HEK293 (cell line): ENCODE measurements at regions of chr2 and their contacts with region 1.

Region 1: DNA sequence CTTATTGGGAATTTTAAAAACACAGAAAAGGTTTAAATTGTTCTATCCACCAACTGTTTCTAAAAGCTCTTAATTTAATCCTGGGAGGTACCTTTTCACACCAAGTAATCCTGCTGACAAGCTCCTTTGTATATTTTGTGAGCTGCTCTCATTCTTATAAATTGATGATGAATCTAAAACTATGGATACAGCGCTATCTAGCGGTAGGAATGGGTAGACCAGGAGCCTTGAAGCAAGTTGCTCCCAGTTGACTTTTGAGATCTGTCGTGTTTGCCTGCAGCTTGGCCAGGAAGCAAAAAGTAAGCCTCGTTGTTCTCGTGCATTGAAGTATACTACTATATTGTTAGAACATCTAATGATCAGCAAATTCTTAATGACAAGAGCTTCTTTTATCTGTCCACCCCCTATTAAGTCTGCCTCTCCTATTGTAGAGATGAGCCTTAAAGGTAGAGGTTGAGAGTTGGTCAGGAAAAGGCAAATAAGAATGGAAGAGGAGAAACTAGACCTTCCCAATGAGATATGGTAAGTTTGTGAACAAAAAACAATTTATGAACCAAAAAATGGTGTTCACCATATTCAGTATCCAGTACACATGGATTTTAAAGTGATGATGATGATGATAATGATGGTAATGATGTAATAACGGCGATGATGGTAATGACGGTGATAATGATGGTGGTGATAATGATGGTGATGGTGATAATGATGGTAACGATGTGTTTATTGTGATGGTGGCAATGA is 212.0 kb upstream of the NCKAP5 start:
- H3K4me3 ChIP-seq: no peak overlapping the region
- H3K27ac ChIP-seq: no peak overlapping the region
- H3K4me1 ChIP-seq: peaks cover 9% of the 10 kb centered on the region
- CTCF ChIP-seq: peak; percentile 64

Region 2: GRCh38 chr2:133561045-133561852 is 219.0 kb before region 1 on chr2:
- CTCF ChIA-PET with region 1: interaction called, 15 read pairs
- POLR2A ChIA-PET with region 1: no interaction called
- H3K4me3 ChIP-seq: no peak overlapping the region
- H3K27ac ChIP-seq: no peak overlapping the region
- H3K4me1 ChIP-seq: no peaks in the 10 kb centered on the region
- CTCF ChIP-seq: peak; percentile 59

Region 3: DNA sequence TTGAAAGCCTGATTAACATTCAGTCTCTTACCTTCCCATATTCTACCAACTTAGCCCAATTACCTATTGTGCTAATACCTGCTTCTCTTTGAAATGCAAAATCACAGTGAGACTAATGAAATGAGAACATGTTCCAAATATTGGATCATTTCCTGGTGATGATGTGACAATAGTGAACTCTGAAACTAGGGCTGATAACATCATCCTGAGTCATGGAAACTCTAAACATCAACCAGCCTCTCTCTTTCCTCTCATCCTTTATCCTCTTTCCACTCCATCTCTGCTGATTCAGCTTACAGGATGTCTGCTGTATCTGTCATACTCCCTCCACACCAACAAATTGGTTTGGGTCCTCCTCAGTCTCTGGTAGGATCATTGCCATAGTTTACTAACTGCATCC is 113.2 kb before region 1 on chr2:
- CTCF ChIA-PET with region 1: interaction called, 13 read pairs
- POLR2A ChIA-PET with region 1: no interaction called
- H3K4me3 ChIP-seq: no peak overlapping the region
- H3K27ac ChIP-seq: no peak overlapping the region
- H3K4me1 ChIP-seq: peaks cover 2% of the 10 kb centered on the region
- CTCF ChIP-seq: no peak

Region 4: DNA sequence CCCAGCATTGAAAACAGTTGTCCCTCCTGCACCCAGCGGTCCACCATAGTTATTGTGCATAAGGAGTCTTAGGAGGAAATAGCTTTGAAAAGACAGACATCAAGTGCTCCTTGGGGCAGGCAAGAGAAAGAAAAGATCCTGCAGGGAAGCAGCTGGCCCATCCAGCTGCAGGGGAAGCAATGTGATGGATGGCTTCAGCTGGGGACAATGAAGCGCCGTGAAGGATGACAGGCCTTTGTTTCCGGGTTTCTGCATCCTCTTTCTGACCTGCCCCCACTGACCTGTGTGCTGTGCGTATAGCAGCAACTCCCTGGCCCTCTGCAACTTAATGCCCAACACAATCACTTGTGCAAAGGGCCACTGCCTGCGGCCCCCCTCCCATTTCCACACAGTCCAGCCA is 69.0 kb before region 1 on chr2:
- CTCF ChIA-PET with region 1: no interaction called
- POLR2A ChIA-PET with region 1: no interaction called
- H3K4me3 ChIP-seq: no peak overlapping the region
- H3K27ac ChIP-seq: no peak overlapping the region
- H3K4me1 ChIP-seq: no peaks in the 10 kb centered on the region
- CTCF ChIP-seq: no peak

Region 5: GRCh38 chr2:133768662-133769435 is 11.4 kb before region 1 on chr2:
- CTCF ChIA-PET with region 1: interaction called, 20 read pairs
- POLR2A ChIA-PET with region 1: no interaction called
- H3K4me3 ChIP-seq: no peak overlapping the region
- H3K27ac ChIP-seq: no peak overlapping the region
- H3K4me1 ChIP-seq: no peaks in the 10 kb centered on the region
- CTCF ChIP-seq: no peak

Region 6: GRCh38 chr2:133790711-133791110 is 10.4 kb after region 1 on chr2:
- CTCF ChIA-PET with region 1: interaction called, 10 read pairs
- POLR2A ChIA-PET with region 1: no interaction called
- H3K4me3 ChIP-seq: no peak overlapping the region
- H3K27ac ChIP-seq: no peak overlapping the region
- H3K4me1 ChIP-seq: no peaks in the 10 kb centered on the region
- CTCF ChIP-seq: no peak